ENCODE measurements at regions of chr13 and their contacts with region 1.

Region 1: GRCh38 chr13:46630431-46631178 is 77.6 kb downstream of the LRCH1 start:
- DNase-seq: no peak
- CTCF ChIP-seq: no peak

Region 2: GRCh38 chr13:46516599-46517338 is 113.8 kb before region 1 on chr13:
- CTCF ChIA-PET with region 1: no interaction called
- POLR2A ChIA-PET with region 1: no interaction called
- DNase-seq: no peak
- CTCF ChIP-seq: no peak

Region 3: GRCh38 chr13:46640843-46641242 is 10.2 kb after region 1 on chr13:
- CTCF ChIA-PET with region 1: interaction called, 24 read pairs
- POLR2A ChIA-PET with region 1: no interaction called
- DNase-seq: no peak
- CTCF ChIP-seq: no peak

Measured in GM10248 (cell line).